HEK293T (cell line): ENCODE measurements at regions of chr1 and their contacts with region 1.

Region 1: DNA sequence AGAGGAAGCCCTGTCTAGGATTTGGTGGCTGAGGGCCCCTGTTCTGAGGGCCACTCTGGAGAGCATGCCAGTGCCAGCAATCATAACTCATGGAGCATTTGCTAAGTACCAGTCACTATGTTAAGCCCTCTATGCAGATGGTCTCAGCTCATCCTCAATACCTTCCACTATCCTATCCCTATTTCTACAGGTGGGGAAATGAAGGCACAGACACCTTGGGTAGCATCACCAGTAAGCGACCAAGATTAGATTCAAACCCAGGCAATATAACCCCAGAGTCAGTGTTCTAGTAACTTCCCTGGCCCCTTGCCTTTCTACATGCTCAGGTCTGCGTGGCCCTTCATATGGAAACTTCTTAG is 7.9 kb upstream of the NBPF1 start:
- DNase-seq: no peak

Region 2: GRCh38 chr1:16607433-16607851 is 13.8 kb before region 1 on chr1:
- CTCF ChIA-PET with region 1: interaction called, 19 read pairs
- POLR2A ChIA-PET with region 1: interaction called, 10 read pairs
- DNase-seq: no peak

Region 3: GRCh38 chr1:16904560-16905111 is 283.4 kb after region 1 on chr1:
- CTCF ChIA-PET with region 1: interaction called, 10 read pairs
- POLR2A ChIA-PET with region 1: interaction called, 13 read pairs
- DNase-seq: peak; percentile 89

Region 4: DNA sequence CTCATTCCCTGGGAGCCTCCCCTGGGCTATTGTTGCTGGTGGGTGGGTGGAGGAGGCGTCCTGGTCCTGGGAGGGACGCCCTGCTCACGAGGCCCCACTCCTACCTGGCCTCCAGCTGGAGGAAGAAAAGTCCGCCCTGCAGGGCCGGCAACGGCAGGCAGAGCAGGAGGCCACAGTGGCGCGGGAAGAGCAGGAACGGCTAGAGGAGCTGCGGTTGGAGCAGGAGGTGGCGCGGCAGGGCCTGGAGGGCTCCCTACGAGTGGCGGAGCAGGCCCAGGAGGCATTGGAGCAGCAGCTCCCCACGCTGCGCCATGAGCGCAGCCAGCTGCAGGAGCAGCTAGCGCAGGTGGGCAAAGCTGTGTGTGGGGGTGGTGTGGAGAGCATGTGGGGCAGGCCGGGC is 325.4 kb after region 1 on chr1:
- CTCF ChIA-PET with region 1: interaction called, 19 read pairs
- POLR2A ChIA-PET with region 1: no interaction called
- DNase-seq: no peak